Gastrocnemius medialis (tissue), 4 donors: ENCODE measurements at regions of chr16 and their contacts with region 1.

Region 1: DNA sequence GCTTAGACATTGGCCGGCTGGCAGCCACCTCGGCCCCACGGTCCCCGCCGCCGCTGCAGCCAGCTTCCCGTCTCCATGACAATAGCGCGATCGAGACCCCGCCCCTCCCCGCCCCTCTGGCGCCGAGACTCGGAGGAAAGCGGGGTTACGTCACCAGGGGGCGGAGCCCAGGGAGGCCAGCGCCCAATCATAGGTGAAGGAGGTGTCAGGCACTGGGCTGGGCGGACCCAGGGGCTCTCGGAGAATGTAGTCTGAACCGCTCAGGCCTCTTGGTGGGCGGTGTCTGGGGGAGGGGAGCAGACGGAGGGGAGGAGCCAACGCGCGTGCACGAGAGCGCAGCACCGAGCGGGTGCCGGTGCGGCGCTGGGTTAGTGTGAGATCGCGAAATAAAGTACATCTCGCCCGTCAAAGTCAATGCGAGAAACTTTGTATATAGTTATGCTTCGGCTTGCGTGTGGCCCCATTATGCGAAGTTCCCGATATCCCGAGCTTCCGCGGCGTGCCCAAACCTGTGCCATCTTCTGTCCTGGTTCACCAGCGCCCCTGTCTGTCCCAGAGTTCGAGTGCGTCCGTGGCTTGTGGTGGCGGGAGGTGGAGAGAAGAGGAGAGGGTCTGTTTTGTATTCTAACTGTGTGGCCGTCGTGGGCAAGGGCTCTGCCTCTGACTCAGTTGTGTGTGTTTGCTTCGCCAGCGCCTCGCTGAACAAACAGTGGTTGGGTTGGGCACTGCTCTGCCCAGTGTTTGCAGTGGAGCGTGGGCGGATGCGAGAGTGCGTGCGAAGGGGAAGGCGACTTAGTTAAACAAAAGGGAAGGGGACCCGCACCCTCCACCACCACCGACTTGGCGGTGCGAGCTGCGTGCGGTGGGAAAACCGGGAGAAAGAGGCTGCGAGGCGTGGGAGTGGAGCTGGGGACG is 1.3 kb upstream of the IRX5 start:
- DNase-seq: peak; percentile 96
- ATAC-seq: peak; percentile 86 to 90
- H3K4me3 ChIP-seq: peak overlapping the region; percentile 62 to 68 (median 66)
- H3K27ac ChIP-seq: peak overlapping the region; percentile 74 to 90 (median 78)
- H3K4me1 ChIP-seq: peaks cover 6 to 20% of the 10 kb centered on the region in 2 donors
- H3K27me3 ChIP-seq: peaks cover 51 to 80% (median 80%) of the 10 kb centered on the region in 3 donors
- CTCF ChIP-seq: no peak
- POLR2A ChIP-seq: peak; percentile 74 to 90

Region 2: GRCh38 chr16:53503270-53503923 is 1426.0 kb before region 1 on chr16:
- in situ Hi-C with region 1: no loop called
- intact Hi-C with region 1: loop called (anchors 5 kb)
- DNase-seq: peak; percentile 100
- ATAC-seq: peak; percentile 90 to 91
- H3K4me3 ChIP-seq: peak overlapping the region; percentile 77 to 91 (median 82)
- H3K27ac ChIP-seq: peak overlapping the region; percentile 95 to 98 (median 96)
- H3K4me1 ChIP-seq: peaks cover 32 to 34% of the 10 kb centered on the region in 2 donors
- H3K27me3 ChIP-seq: no peaks in the 10 kb centered on the region
- CTCF ChIP-seq: peak in 1 of 5 experiments; percentile 5
- POLR2A ChIP-seq: peak; percentile 80 to 89

Region 3: GRCh38 chr16:53703590-53704444 is 1225.5 kb before region 1 on chr16 and contains the starts of genes FTO and RPGRIP1L:
- in situ Hi-C with region 1: no loop called
- intact Hi-C with region 1: loop called (anchors 1 kb)
- DNase-seq: peak; percentile 98 to 99
- ATAC-seq: peak; percentile 99 to 100
- H3K4me3 ChIP-seq: peak within 1 kb of the TSS; percentile 85 to 98 (median 92)
- H3K27ac ChIP-seq: peak within 1 kb of the TSS; percentile 83 to 89 (median 86)
- H3K4me1 ChIP-seq: peaks cover 11 to 19% of the 10 kb centered on the region in 2 donors
- H3K27me3 ChIP-seq: no peaks in the 10 kb centered on the region
- CTCF ChIP-seq: peak in 2 of 5 experiments; percentile 30 to 32
- POLR2A ChIP-seq: peak; percentile 13 to 48
- total RNA-seq, gene FTO: 62.0 to 90.1 (median 75.1) TPM
- total RNA-seq, gene RPGRIP1L: 0.53 to 0.75 (median 0.68) TPM

Region 4: GRCh38 chr16:54193665-54194333 is 735.5 kb before region 1 on chr16:
- in situ Hi-C with region 1: loop called in 1 of 4 experiments (anchors 25 kb)
- intact Hi-C with region 1: no loop called
- DNase-seq: peak; percentile 63 to 65
- ATAC-seq: peak; percentile 84 to 96
- H3K4me3 ChIP-seq: peak overlapping the region; percentile 18 to 69 (median 43)
- H3K27ac ChIP-seq: peak overlapping the region; percentile 60 to 87 (median 72)
- H3K4me1 ChIP-seq: peaks cover 0 to 3% of the 10 kb centered on the region in 2 donors
- H3K27me3 ChIP-seq: peaks cover 0 to 5% (median 0%) of the 10 kb centered on the region in 3 donors
- CTCF ChIP-seq: peak; percentile 58 to 89 (median 71)
- POLR2A ChIP-seq: no peak

Region 5: DNA sequence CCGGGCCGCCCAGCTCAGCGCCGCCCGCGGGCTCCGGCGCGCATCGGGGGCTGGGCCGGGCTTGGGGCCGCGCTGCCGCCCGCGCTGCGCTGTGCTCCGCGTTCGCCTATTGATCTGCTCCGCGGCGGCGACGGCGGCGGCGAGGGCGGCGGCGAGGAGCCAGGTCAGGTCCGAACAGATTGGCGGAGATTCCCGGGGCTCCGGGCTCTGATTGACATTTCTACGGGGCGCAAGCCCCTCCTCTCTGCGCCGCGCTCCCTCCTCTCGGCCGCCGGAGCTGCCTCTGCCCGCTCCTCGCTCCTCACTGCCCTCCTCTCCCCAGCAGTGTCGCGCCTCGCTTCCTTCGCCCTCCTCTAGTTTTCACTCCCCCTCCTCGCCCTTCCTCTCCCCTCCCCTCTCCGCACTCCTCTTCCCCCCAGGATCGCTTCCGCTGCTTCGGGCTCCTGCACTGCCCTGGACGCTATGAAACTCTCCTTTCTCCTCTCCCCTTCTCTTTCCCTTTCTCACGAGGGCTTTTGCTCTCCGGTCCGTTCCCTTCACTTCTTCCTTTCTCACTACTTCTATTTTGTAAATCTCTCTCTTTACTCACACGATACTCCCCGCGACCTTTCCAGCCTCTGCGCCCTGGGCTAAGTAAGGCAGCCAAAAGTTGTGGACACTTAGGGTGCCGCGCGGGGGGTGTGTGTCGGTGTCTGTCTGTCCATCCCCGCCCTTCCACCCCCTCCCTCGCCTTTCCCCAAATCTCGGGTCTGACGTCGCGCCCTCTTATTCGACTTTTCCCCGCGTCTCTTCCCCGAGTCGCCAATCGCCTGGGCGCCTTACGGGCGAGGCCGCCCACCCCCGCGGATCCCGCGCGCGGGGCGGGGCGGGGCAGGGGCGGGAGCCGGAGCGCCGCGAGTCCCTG is 643.0 kb before region 1 on chr16 and contains the start of gene IRX3:
- in situ Hi-C with region 1: loop called in 1 of 4 experiments (anchors 25 kb)
- intact Hi-C with region 1: loop called (anchors 2 kb)
- DNase-seq: peak; percentile 77 to 84
- ATAC-seq: peak; percentile 75 to 84
- H3K4me3 ChIP-seq: peak within 1 kb of the TSS; percentile 61 to 94 (median 64)
- H3K27ac ChIP-seq: peak within 1 kb of the TSS; percentile 61 to 86 (median 82)
- H3K4me1 ChIP-seq: peaks cover 0 to 7% of the 10 kb centered on the region in 2 donors
- H3K27me3 ChIP-seq: peaks cover 34 to 72% (median 65%) of the 10 kb centered on the region in 3 donors
- CTCF ChIP-seq: no peak
- POLR2A ChIP-seq: peak; percentile 41 to 65
- total RNA-seq, gene IRX3: 3.5 to 40.6 (median 12.0) TPM

Region 6: GRCh38 chr16:54796211-54796610 is 133.1 kb before region 1 on chr16:
- in situ Hi-C with region 1: no loop called
- intact Hi-C with region 1: no loop called
- DNase-seq: no peak
- ATAC-seq: no peak
- H3K4me3 ChIP-seq: no peak overlapping the region
- H3K27ac ChIP-seq: no peak overlapping the region
- H3K4me1 ChIP-seq: no peaks in the 10 kb centered on the region
- H3K27me3 ChIP-seq: no peaks in the 10 kb centered on the region
- CTCF ChIP-seq: no peak
- POLR2A ChIP-seq: no peak

Region 7: DNA sequence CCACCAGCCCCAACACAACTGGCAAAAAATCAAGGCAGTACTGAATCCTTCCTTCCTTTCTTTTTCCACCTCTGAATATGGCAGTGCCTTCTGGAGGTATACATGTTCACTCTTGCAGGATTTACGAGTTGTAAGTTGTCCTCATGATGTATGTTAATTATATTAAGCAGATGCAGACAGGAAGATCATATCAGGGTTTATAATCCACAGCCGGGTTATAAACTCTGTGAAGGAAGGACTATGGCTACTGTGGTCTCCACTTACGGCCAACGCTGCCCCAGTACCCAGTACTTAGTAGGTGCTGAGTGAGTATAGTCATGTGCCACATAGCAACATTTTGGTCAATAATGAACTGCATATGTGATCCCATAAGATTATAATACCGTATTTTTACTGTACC is 18.3 kb before region 1 on chr16:
- in situ Hi-C with region 1: no loop called
- intact Hi-C with region 1: no loop called
- DNase-seq: no peak
- ATAC-seq: no peak
- H3K4me3 ChIP-seq: no peak overlapping the region
- H3K27ac ChIP-seq: no peak overlapping the region
- H3K4me1 ChIP-seq: no peaks in the 10 kb centered on the region
- H3K27me3 ChIP-seq: no peaks in the 10 kb centered on the region
- CTCF ChIP-seq: no peak
- POLR2A ChIP-seq: no peak

Region 8: DNA sequence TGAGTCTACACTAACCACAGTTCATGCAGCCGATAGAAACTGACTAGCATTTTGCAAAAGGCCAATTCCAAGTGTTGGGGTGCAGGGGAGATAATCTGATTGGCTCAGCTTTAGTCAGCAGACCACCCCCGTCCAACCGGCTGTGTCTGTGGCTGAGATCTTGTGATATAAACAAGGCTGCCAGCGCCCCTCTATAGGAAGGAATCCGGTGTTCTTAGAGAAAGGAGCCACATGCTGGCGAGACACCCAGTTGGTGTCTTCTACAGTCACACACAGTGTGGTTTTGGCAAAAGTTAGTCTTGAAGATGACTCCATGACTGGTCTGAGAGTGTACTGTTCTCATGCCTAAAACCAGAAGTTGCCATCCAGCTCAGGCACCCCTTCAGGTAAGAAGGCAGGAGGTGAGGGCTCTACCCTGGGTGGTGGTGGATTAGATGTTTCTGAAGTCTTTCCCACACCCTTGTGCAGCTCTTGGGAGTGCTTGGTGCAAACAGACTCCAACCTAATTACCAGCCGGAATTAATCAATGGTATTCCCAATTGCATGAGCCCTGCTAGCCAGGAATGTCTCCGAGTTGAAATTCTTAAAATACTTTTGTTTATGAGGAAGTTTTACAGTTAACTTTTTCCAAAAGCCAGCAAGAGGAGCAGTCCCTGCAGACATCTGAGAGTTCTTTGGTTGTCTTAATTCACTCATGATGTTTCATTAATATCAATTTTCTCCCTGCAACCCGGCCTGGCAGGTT is 222.4 kb after region 1 on chr16:
- in situ Hi-C with region 1: no loop called
- intact Hi-C with region 1: no loop called
- DNase-seq: no peak
- ATAC-seq: no peak
- H3K4me3 ChIP-seq: no peak overlapping the region
- H3K27ac ChIP-seq: no peak overlapping the region
- H3K4me1 ChIP-seq: no peaks in the 10 kb centered on the region
- H3K27me3 ChIP-seq: peaks cover 0 to 3% (median 0%) of the 10 kb centered on the region in 3 donors
- CTCF ChIP-seq: no peak
- POLR2A ChIP-seq: no peak

Region 9: GRCh38 chr16:55257966-55258613 is 328.7 kb after region 1 on chr16:
- in situ Hi-C with region 1: no loop called
- intact Hi-C with region 1: loop called (anchors 10 kb)
- DNase-seq: peak in 1 of 2 donors; percentile 30
- ATAC-seq: peak; percentile 7 to 30
- H3K4me3 ChIP-seq: no peak overlapping the region
- H3K27ac ChIP-seq: peak overlapping the region in 1 of 4 donors; percentile 32
- H3K4me1 ChIP-seq: peaks cover 0 to 11% of the 10 kb centered on the region in 2 donors
- H3K27me3 ChIP-seq: no peaks in the 10 kb centered on the region
- CTCF ChIP-seq: peak; percentile 44 to 64 (median 58)
- POLR2A ChIP-seq: no peak

Region 10: GRCh38 chr16:55370762-55371482 is 441.6 kb after region 1 on chr16:
- in situ Hi-C with region 1: no loop called
- intact Hi-C with region 1: loop called (anchors 5 kb)
- DNase-seq: peak; percentile 48 to 49
- ATAC-seq: peak; percentile 76 to 83
- H3K4me3 ChIP-seq: no peak overlapping the region
- H3K27ac ChIP-seq: no peak overlapping the region
- H3K4me1 ChIP-seq: peaks cover 0 to 2% of the 10 kb centered on the region in 2 donors
- H3K27me3 ChIP-seq: peaks cover 0 to 17% (median 3%) of the 10 kb centered on the region in 3 donors
- CTCF ChIP-seq: peak in 4 of 5 experiments; percentile 38 to 58 (median 48)
- POLR2A ChIP-seq: no peak